ENCODE measurements at regions of chr5 and their contacts with region 1.

Region 1: GRCh38 chr5:138180183-138180782 is 1.4 kb downstream of the KIF20A start:
- DNase-seq: no peak
- ATAC-seq: no peak
- H3K4me3 ChIP-seq: no peak overlapping the region
- H3K27ac ChIP-seq: no peak overlapping the region
- H3K4me1 ChIP-seq: peaks cover 12% of the 10 kb centered on the region
- H3K27me3 ChIP-seq: no peaks in the 10 kb centered on the region
- CTCF ChIP-seq: no peak

Region 2: GRCh38 chr5:138559937-138560336 is 379.7 kb after region 1 on chr5:
- intact Hi-C with region 1: loop called in 1 of 2 experiments (anchors 5 kb)
- DNase-seq: no peak
- ATAC-seq: peak in 3 of 4 donors; percentile 16 to 50 (median 50)
- H3K4me3 ChIP-seq: no peak overlapping the region
- H3K27ac ChIP-seq: no peak overlapping the region
- H3K4me1 ChIP-seq: no peaks in the 10 kb centered on the region
- H3K27me3 ChIP-seq: no peaks in the 10 kb centered on the region
- CTCF ChIP-seq: no peak

Measured in psoas muscle (tissue), 8 donors.